Dendritic cell treated with granulocyte-macrophage colony-stimulating factor and Interleukin-4, amounts not matched to agents 40 ng/mL and 50 ng/mL, for 4 days (primary cell): ENCODE measurements at regions of chr16 and their contacts with region 1.

Region 1: GRCh38 chr16:28317040-28317880 is 24.9 kb downstream of the SBK1 start:
- H3K4me3 Mint-ChIP-seq: no peak overlapping the region
- H3K27ac Mint-ChIP-seq: no peak overlapping the region
- H3K4me1 Mint-ChIP-seq: no peaks in the 10 kb centered on the region
- H3K27me3 Mint-ChIP-seq: peaks cover 7% of the 10 kb centered on the region

Region 2: DNA sequence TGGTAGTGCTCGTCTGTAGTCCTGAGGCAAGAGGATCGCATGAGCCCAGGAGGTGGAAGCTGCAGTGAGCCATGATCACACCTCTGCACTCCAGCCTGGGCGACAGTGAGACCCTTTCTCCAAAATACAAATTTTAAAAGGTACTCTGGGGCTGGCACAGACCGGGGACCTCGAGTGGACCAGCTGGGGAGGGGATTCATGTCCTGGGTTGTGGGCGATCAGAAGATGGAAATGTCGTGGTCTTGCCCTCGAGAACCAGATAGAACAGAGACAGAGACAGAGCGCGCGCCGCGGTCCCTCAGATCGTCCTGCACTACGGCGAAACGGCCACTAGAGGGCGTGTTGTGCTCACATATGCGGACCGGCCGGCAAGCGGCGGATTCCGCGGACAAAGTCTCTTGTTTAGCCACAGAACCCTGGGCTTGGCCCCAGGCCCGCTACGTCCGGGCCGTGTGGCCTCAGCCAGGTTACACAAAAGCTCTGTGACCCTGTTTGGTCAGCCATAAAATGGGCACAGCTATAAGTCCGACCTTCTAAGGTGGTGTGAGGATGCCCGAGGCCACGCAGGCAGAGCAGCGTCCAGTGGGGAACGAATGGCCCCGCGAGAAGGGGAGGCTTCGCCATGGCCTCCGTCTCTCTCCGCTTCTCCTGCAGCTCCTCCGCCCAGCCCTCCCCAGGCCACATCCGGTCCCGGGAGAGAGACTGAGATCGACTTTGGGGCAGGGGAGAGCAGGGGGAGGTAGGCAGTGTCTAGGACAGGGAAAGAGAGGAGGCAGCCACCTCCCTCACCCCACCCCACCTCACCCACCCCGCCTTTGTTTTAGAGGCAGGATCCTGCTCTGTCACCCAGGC is 39.5 kb before region 1 on chr16:
- intact Hi-C with region 1: loop called (anchors 1 kb)
- H3K4me3 Mint-ChIP-seq: peak overlapping the region; percentile 55
- H3K27ac Mint-ChIP-seq: no peak overlapping the region
- H3K4me1 Mint-ChIP-seq: peaks cover 13% of the 10 kb centered on the region
- H3K27me3 Mint-ChIP-seq: peaks cover 42% of the 10 kb centered on the region